RWPE1 (cell line): ENCODE measurements at regions of chr10 and their contacts with region 1.

Region 1: DNA sequence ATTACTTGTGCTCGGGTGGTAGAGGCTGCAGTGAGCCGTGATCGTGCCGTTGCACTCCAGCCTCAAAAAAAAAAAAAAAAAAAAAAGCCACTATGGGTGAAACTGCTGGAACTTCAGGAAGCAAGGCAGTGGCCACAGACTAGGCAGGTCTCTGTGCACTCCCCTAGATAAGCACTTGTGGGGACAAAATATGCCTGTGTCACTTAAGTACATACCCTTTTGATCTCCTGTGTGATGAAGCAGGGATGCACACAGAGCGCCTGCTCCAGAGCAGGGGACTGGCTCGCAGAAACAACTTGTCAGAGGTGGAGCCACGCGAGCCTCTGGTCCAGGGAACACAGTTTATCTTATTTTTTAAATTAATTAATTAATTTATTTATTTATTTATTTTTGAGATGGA is 42.9 kb upstream of the PSAP start:
- DNase-seq: no peak
- H3K27ac ChIP-seq: no peak overlapping the region
- CTCF ChIP-seq: no peak

Region 2: GRCh38 chr10:71068861-71069271 is 825.1 kb before region 1 on chr10:
- CTCF ChIA-PET with region 1: no interaction called
- POLR2A ChIA-PET with region 1: no interaction called
- DNase-seq: peak; percentile 89
- H3K27ac ChIP-seq: peak overlapping the region; percentile 92
- CTCF ChIP-seq: no peak

Region 3: GRCh38 chr10:71829171-71829570 is 64.7 kb before region 1 on chr10:
- CTCF ChIA-PET with region 1: interaction called, 20 read pairs
- POLR2A ChIA-PET with region 1: interaction called, 4 read pairs
- DNase-seq: no peak
- H3K27ac ChIP-seq: no peak overlapping the region
- CTCF ChIP-seq: no peak

Region 4: GRCh38 chr10:71850637-71851464 is 43.1 kb before region 1 on chr10 and contains the start of gene PSAP:
- CTCF ChIA-PET with region 1: interaction called, 22 read pairs
- POLR2A ChIA-PET with region 1: interaction called, 5 read pairs
- DNase-seq: peak; percentile 100
- H3K27ac ChIP-seq: peak within 1 kb of the TSS; percentile 86
- CTCF ChIP-seq: no peak

Region 5: GRCh38 chr10:71868192-71868697 is 25.7 kb before region 1 on chr10:
- CTCF ChIA-PET with region 1: interaction called, 21 read pairs
- POLR2A ChIA-PET with region 1: no interaction called
- DNase-seq: peak; percentile 73
- H3K27ac ChIP-seq: peak overlapping the region; percentile 84
- CTCF ChIP-seq: no peak

Region 6: GRCh38 chr10:71905164-71905563 is 11.2 kb after region 1 on chr10:
- CTCF ChIA-PET with region 1: interaction called, 13 read pairs
- POLR2A ChIA-PET with region 1: no interaction called
- DNase-seq: no peak
- H3K27ac ChIP-seq: no peak overlapping the region
- CTCF ChIP-seq: no peak

Region 7: GRCh38 chr10:71957546-71958275 is 63.8 kb after region 1 on chr10:
- CTCF ChIA-PET with region 1: interaction called, 11 read pairs
- POLR2A ChIA-PET with region 1: no interaction called
- DNase-seq: no peak
- H3K27ac ChIP-seq: no peak overlapping the region
- CTCF ChIP-seq: no peak

Region 8: GRCh38 chr10:71998840-71999194 is 104.9 kb after region 1 on chr10:
- CTCF ChIA-PET with region 1: interaction called, 6 read pairs
- POLR2A ChIA-PET with region 1: interaction called, 13 read pairs
- DNase-seq: peak; percentile 98
- H3K27ac ChIP-seq: peak overlapping the region; percentile 96
- CTCF ChIP-seq: no peak